Activated CD4-positive, alpha-beta T cell treated with anti-CD3 and anti-CD28 coated beads, Interleukin-2, amount 10 ng/mL, durations not matched to agents 24 days and 14 days (primary cell): ENCODE measurements at regions of chr3 and their contacts with region 1.

Region 1: DNA sequence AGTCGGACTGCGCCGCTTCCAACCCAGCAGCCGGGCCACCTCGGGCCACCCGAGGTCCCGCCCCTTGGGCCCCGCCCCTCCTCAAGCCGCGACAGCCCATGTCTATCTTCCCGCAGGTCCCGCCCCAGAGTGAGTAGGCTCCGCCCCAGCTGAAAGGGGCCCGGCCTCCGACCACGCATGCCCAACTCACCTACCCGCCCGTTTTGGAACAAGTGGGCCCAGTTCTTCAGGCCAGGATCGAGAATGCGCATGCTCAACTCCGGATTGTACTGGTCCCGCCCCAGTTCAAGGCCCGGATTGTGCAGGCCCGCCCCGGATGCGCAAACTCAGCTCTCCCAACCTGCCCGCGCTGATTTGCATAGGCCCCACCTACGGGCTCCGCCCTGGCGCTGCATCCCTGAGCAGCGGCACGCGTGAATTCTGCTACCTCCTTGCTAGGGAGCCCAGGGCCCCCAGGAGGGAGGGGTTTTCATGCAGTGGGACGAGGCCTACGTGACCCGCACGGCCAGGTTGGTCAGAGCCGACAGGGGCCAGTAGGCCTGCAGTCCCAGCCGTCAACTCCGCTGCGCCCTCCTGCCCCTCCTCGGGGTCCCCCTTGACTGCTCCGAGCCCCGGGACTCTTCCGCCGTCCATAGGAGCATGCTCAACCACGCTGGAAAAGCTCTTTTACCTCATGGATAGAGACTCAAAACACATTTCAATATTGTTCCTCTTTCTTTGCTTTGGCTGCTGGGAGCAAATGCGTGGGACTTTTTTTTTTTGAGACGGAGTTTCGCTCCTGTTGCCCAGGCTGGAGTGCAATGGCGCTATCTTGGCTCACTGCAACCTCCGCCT is at the start of gene PFKFB4:
- DNase-seq: peak; percentile 100
- H3K4me3 Mint-ChIP-seq: peak within 1 kb of the TSS; percentile 93
- H3K27ac Mint-ChIP-seq: peak within 1 kb of the TSS; percentile 97
- H3K4me1 Mint-ChIP-seq: peaks cover 48% of the 10 kb centered on the region
- H3K27me3 Mint-ChIP-seq: no peaks in the 10 kb centered on the region
- total RNA-seq, gene PFKFB4: 38.2 and 44.0 TPM in 2 replicates

Region 2: DNA sequence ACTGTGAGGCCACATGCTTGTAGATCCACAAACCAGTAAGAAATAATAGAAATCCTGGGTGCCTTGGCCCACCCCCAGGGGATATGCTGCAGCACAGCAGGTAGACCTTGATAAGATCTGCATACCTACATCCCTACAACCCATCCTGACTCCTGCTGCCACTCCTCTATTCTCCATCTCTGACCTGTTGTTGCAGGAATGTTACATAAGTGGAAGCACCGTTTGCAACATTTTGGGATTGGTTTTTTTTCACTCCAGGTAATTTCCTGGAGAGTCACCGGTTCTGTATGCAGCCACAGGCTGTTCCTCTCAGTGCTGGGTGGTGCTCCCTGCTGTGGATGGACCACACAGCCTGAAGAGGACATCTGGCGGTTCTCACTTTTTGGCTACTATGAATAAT is 962.2 kb before region 1 on chr3:
- intact Hi-C with region 1: no loop called
- DNase-seq: no peak
- H3K4me3 Mint-ChIP-seq: no peak overlapping the region
- H3K27ac Mint-ChIP-seq: no peak overlapping the region
- H3K4me1 Mint-ChIP-seq: no peaks in the 10 kb centered on the region
- H3K27me3 Mint-ChIP-seq: no peaks in the 10 kb centered on the region

Region 3: GRCh38 chr3:48188266-48189201 is 368.5 kb before region 1 on chr3 and contains the start of gene CDC25A:
- intact Hi-C with region 1: loop called (anchors 1 kb)
- DNase-seq: peak; percentile 98
- H3K4me3 Mint-ChIP-seq: peak within 1 kb of the TSS; percentile 93
- H3K27ac Mint-ChIP-seq: peak within 1 kb of the TSS; percentile 89
- H3K4me1 Mint-ChIP-seq: peaks cover 22% of the 10 kb centered on the region
- H3K27me3 Mint-ChIP-seq: peaks cover 2% of the 10 kb centered on the region
- total RNA-seq, gene CDC25A: 57.0 and 60.2 TPM in 2 replicates

Region 4: GRCh38 chr3:48268381-48269183 is 288.4 kb before region 1 on chr3:
- intact Hi-C with region 1: loop called (anchors 2 kb)
- DNase-seq: peak; percentile 92
- H3K4me3 Mint-ChIP-seq: peak overlapping the region; percentile 73
- H3K27ac Mint-ChIP-seq: peak overlapping the region; percentile 96
- H3K4me1 Mint-ChIP-seq: peaks cover 37% of the 10 kb centered on the region
- H3K27me3 Mint-ChIP-seq: no peaks in the 10 kb centered on the region

Region 5: GRCh38 chr3:48439820-48440589 is 117.0 kb before region 1 on chr3 and contains the starts of genes CCDC51 and TMA7:
- intact Hi-C with region 1: loop called (anchors 2 kb)
- DNase-seq: peak; percentile 100
- H3K4me3 Mint-ChIP-seq: peak within 1 kb of the TSS; percentile 96
- H3K27ac Mint-ChIP-seq: peak within 1 kb of the TSS; percentile 92
- H3K4me1 Mint-ChIP-seq: peaks cover 20% of the 10 kb centered on the region
- H3K27me3 Mint-ChIP-seq: no peaks in the 10 kb centered on the region
- total RNA-seq, gene CCDC51: 24.4 and 25.9 TPM in 2 replicates
- total RNA-seq, gene TMA7: 272 and 275 TPM in 2 replicates

Region 6: DNA sequence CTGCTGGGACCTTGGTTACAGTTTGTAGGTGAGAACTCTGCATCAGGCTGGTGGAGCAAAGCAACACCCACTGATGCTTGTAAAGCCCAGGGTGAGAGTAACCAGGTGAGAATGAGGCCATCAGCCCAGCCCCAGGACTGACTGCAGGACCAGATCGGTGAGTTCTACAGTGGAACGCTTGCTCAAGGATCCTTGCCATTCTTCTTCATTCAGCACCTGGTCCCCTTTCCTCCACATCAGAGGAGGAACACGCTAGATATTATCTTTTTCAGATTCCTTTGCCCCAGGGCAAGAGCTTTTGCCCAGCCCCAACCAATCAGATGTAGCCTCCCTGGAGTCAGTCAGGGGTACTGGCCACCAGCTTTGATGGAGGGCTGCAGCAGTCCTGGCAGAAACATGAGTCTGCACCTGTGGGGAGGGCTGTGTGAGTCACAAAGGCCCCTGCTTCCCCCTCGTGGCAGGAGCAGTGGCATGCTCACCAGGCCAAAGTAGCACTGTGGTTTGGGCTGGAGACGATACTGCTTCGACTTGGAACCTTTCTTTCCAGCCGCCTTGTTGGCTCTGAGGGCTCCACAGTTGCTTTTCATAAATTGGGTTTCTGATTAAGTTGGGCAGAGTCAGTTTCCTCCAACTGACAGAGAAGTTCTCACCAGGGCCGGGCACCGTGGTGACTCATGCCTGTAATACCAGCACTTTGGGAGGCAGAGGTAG is 49.5 kb before region 1 on chr3:
- intact Hi-C with region 1: loop called (anchors 5 kb)
- DNase-seq: peak; percentile 91
- H3K4me3 Mint-ChIP-seq: peak overlapping the region; percentile 38
- H3K27ac Mint-ChIP-seq: peak overlapping the region; percentile 44
- H3K4me1 Mint-ChIP-seq: peaks cover 40% of the 10 kb centered on the region
- H3K27me3 Mint-ChIP-seq: no peaks in the 10 kb centered on the region

Region 7: GRCh38 chr3:48518638-48519276 is 38.3 kb before region 1 on chr3:
- intact Hi-C with region 1: no loop called
- DNase-seq: peak; percentile 73
- H3K4me3 Mint-ChIP-seq: no peak overlapping the region
- H3K27ac Mint-ChIP-seq: no peak overlapping the region
- H3K4me1 Mint-ChIP-seq: peaks cover 55% of the 10 kb centered on the region
- H3K27me3 Mint-ChIP-seq: no peaks in the 10 kb centered on the region

Region 8: GRCh38 chr3:48635222-48636021 is 78.4 kb after region 1 on chr3 and contains the start of gene SLC26A6:
- intact Hi-C with region 1: loop called (anchors 1 kb)
- DNase-seq: peak; percentile 99
- H3K4me3 Mint-ChIP-seq: peak within 1 kb of the TSS; percentile 93
- H3K27ac Mint-ChIP-seq: peak within 1 kb of the TSS; percentile 91
- H3K4me1 Mint-ChIP-seq: peaks cover 19% of the 10 kb centered on the region
- H3K27me3 Mint-ChIP-seq: no peaks in the 10 kb centered on the region
- total RNA-seq, gene SLC26A6: 57.2 and 58.2 TPM in 2 replicates

Region 9: DNA sequence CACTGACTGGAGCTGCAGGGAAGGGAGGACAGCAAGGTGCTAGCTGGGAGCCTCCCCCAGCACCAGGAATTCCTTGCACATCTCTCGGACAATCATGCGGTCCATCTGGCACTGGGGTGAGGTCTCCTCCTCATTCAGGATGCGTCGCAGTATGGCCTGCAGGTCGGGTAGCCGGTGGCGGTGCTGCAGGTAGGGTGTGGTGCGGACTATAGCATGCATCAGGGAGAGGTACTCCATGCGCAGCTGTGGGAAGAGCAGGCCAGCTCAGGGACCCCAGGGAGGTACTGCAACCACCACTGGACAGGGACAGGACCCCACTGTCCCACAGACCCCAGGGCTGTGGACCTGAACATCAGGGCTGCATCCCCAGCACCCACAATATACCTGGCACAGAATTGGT is 117.5 kb after region 1 on chr3:
- intact Hi-C with region 1: no loop called
- DNase-seq: no peak
- H3K4me3 Mint-ChIP-seq: no peak overlapping the region
- H3K27ac Mint-ChIP-seq: no peak overlapping the region
- H3K4me1 Mint-ChIP-seq: no peaks in the 10 kb centered on the region
- H3K27me3 Mint-ChIP-seq: no peaks in the 10 kb centered on the region